Activated T-helper 1 cell treated with anti-CD3 and anti-CD28 coated beads, Interleukin-12 subunit alpha, Interleukin-12 subunit beta, Interleukin-2, Interleukin-4 antibody, amounts not matched to agents 30 ng/mL and 10 ng/mL and 1 ng/mL, durations not matched to agents 14 hours and 24 hours and 36 hours (primary cell): ENCODE measurements at regions of chr2 and their contacts with region 1.

Region 1: GRCh38 chr2:148524519-148524919 is 120.0 kb upstream of the EPC2 start:
- DNase-seq: peak; percentile 58
- H3K4me3 Mint-ChIP-seq: peak overlapping the region; percentile 49
- H3K27ac Mint-ChIP-seq: peak overlapping the region; percentile 95
- H3K4me1 Mint-ChIP-seq: peaks cover 84% of the 10 kb centered on the region
- H3K27me3 Mint-ChIP-seq: no peaks in the 10 kb centered on the region

Region 2: DNA sequence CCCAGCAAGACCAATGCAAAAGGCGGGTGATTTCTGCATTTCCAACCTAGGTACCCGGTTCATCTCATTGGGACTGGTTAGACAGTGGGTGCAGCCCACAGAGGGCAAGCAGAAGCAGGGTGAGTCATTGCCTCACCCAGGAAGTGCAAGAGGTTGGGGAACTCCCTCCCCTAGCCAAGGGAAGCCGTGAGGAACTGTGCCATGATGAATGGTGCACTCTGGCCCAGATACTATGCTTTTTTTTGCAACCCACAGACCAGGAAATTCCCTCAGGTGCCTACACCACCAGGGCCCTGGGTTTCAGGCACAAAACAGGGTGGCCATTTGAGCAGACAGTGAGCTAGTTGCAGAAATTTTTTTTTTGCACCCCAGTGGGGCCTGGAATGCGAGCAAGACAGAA is 1342.3 kb before region 1 on chr2:
- intact Hi-C with region 1: loop called (anchors 5 kb)
- DNase-seq: peak; percentile 67
- H3K4me3 Mint-ChIP-seq: peak overlapping the region; percentile 40
- H3K27ac Mint-ChIP-seq: peak overlapping the region; percentile 86
- H3K4me1 Mint-ChIP-seq: peaks cover 32% of the 10 kb centered on the region
- H3K27me3 Mint-ChIP-seq: peaks cover 5% of the 10 kb centered on the region

Region 3: DNA sequence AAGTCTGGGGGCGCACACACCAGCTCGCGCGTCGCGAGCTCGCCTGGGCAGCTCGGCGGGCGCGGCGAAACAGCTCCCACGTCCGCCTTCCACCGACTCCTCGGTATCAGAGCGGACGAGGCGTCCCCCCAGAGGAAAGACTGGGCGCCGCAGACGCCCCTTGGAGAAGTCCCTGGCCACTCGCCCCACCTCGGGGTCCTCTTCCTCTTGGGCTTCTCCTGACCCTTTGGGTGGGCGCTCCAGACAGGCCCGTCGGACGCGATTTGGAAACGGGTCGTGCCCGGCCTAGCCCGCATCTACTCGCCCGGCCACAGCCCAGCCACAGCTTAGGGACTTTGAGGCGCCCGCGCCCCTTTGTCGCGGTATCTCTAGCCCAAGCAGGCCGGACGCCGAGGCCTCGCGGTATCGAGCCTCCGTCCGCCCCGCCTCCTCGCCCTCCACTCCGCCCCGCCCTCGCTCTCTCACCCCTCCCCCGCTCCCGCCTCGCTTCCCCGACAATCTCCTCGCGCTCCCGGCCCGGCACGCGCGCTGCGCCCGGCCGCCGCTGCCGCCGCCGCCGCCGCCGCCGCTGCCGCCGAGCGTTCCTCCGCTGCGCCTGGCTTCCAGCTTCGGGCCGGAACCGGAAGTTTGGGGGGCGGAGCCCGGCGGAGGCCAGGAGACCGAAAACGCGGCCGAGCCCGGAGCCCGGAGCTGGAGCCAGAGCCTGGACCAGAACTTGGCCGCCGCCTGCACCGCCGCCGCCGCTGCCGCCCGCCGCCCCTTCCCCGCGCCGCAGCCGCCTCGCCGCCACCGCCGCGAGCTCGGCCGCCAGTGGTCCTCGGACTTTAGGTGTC is 680.4 kb before region 1 on chr2:
- intact Hi-C with region 1: loop called (anchors 10 kb)
- DNase-seq: peak; percentile 85
- H3K4me3 Mint-ChIP-seq: peak overlapping the region; percentile 95
- H3K27ac Mint-ChIP-seq: peak overlapping the region; percentile 84
- H3K4me1 Mint-ChIP-seq: peaks cover 35% of the 10 kb centered on the region
- H3K27me3 Mint-ChIP-seq: peaks cover 52% of the 10 kb centered on the region

Region 4: DNA sequence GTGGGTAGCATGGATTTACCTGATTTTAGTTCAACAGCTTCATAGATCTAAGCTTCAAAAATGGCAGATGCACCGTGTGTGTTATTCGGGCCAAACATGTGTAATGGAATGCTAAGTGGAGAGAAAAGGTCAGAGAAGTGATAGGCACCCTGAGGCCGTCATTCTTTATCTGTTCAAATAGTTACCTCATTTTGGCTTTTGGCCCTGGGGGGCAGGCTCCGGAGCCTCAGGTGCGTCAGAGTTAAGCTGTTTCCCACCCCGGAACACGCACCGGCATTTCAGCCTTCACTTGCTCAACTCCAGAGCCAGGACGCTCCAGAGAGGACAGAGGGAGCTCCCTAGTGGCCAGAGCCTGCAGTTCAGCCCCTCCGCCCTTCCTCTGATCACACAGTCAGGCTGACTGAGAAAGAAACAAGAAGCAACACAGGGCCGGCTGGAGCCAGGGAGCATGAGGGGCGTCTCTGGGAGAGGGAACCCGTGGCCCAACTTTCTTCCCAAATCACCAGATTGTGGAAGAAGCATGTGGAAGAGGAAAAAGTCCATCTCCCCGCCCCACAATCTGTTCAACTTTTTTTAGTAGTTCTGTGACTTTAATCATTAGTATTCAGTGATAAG is 15.1 kb before region 1 on chr2:
- intact Hi-C with region 1: loop called (anchors 1 kb)
- DNase-seq: peak; percentile 77
- H3K4me3 Mint-ChIP-seq: peak overlapping the region; percentile 61
- H3K27ac Mint-ChIP-seq: peak overlapping the region; percentile 79
- H3K4me1 Mint-ChIP-seq: peaks cover 40% of the 10 kb centered on the region
- H3K27me3 Mint-ChIP-seq: peaks cover 2% of the 10 kb centered on the region

Region 5: DNA sequence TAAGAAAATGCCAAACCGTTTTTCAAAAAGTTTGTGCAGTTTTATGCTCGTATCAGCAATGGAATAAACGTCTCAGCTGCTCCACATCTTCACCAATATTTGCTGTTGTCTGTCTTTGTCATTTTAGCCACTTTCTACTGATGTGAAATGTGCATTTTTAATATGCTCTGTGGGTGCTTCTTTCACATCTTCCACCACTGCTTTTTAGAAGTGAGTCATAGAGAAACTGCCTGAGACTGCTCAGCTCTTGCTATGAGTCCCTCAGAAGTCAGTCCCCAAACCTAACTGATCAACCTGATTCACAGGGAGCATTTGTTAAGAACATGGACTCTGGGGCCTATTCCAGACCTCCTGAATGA is 79.0 kb after region 1 on chr2:
- intact Hi-C with region 1: loop called (anchors 1 kb)
- DNase-seq: peak; percentile 40
- H3K4me3 Mint-ChIP-seq: no peak overlapping the region
- H3K27ac Mint-ChIP-seq: peak overlapping the region; percentile 96
- H3K4me1 Mint-ChIP-seq: peaks cover 29% of the 10 kb centered on the region
- H3K27me3 Mint-ChIP-seq: peaks cover 13% of the 10 kb centered on the region

Region 6: GRCh38 chr2:148658807-148659722 is 134.5 kb after region 1 on chr2:
- intact Hi-C with region 1: loop called (anchors 1 kb)
- DNase-seq: no peak
- H3K4me3 Mint-ChIP-seq: peak overlapping the region; percentile 25
- H3K27ac Mint-ChIP-seq: peak overlapping the region; percentile 49
- H3K4me1 Mint-ChIP-seq: peaks cover 66% of the 10 kb centered on the region
- H3K27me3 Mint-ChIP-seq: no peaks in the 10 kb centered on the region

Region 7: DNA sequence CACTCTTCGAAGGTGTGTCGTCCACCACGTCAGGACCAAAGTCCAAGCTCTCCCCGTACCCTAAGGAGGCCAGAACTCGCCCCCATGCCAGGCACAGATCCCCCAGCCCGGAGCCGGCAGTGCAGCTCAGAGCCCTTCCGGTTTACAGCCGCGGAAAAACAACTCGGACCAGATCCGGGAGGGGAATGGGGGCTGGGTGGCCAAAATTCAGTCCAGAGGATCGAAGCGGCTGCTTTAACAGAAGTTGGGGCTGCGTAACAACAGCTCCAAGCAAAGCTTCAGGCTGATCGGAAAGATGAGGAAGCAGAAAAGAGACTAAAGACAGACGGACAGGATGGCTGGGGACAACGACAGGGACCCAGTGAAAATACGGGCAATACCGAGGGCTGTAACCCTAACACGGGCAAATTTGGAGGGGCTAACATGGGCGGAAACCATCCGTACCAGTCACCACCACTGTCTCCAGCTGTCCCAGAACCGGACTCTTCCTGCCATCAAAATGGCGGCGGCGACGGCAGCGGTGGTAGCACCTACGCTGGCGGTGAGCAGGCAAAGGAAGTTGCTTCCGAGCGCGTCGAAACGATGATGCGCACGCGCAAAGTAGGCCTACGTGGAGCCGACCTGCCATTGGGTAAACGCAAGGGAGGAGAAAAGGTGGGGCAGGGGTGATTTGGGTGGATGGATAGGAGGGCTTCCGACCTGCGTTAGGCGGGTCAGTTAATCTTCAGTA is 1062.9 kb after region 1 on chr2 and contains the start of gene MMADHC:
- intact Hi-C with region 1: loop called (anchors 10 kb)
- DNase-seq: peak; percentile 91
- H3K4me3 Mint-ChIP-seq: peak within 1 kb of the TSS; percentile 97
- H3K27ac Mint-ChIP-seq: peak within 1 kb of the TSS; percentile 99
- H3K4me1 Mint-ChIP-seq: peaks cover 43% of the 10 kb centered on the region
- H3K27me3 Mint-ChIP-seq: peaks cover 10% of the 10 kb centered on the region
- total RNA-seq, gene MMADHC: 127 and 129 TPM in 2 replicates